ENCODE measurements at regions of chr2 and their contacts with region 1.

Region 1: DNA sequence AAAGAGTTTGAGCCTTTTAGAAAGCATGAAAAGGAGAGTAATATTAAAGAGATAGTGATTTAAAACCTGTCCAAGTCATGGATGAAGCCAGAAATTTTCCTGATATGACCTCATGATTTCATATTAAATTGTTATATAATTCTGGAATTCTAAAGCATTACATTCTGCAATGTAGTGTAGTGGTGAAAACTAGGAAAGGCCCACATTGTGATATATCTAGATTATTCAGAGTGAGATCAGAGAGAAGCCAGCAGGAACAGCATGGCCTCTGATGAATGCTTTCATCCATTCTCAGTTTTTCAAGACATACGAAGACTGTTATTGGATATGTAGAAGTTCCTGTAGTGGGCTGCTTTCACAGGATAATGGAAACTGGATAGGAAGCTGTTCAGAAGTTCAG is 98.8 kb downstream of the LCLAT1 start:
- DNase-seq: no peak
- H3K4me3 ChIP-seq: no peak overlapping the region
- H3K27ac ChIP-seq: no peak overlapping the region
- H3K4me1 ChIP-seq: peaks cover 0 to 10% (median 3%) of the 10 kb centered on the region in 4 donors
- H3K27me3 ChIP-seq: no peaks in the 10 kb centered on the region
- CTCF ChIP-seq: no peak
- EP300 ChIP-seq: no peak
- POLR2A ChIP-seq: no peak

Region 2: GRCh38 chr2:32010670-32011484 is 1465.0 kb after region 1 on chr2 and contains the start of gene MEMO1:
- in situ Hi-C with region 1: no loop called
- intact Hi-C with region 1: loop called (anchors 5 kb)
- DNase-seq: peak; percentile 95
- H3K4me3 ChIP-seq: peak within 1 kb of the TSS; percentile 73 to 92 (median 84)
- H3K27ac ChIP-seq: peak within 1 kb of the TSS; percentile 95 to 98 (median 96)
- H3K4me1 ChIP-seq: peaks cover 0 to 35% (median 28%) of the 10 kb centered on the region in 4 donors
- H3K27me3 ChIP-seq: no peaks in the 10 kb centered on the region
- CTCF ChIP-seq: no peak
- EP300 ChIP-seq: peak; percentile 10
- POLR2A ChIP-seq: peak; percentile 69
- total RNA-seq, gene MEMO1: 7.5 to 25.1 (median 17.0) TPM

Measured in transverse colon (tissue), 4 donors.